Caco-2 (cell line): ENCODE measurements at regions of chr18 and their contacts with region 1.

Region 1: GRCh38 chr18:56575819-56576663 is 62.4 kb downstream of the TXNL1 start:
- DNase-seq: peak in 1 of 2 experiments; percentile 22
- H3K4me3 ChIP-seq: no peak overlapping the region
- H3K4me3 Mint-ChIP-seq: no peak overlapping the region
- H3K27ac Mint-ChIP-seq: no peak overlapping the region
- H3K4me1 ChIP-seq: no peaks in the 10 kb centered on the region
- H3K4me1 Mint-ChIP-seq: peaks cover under 1% of the 10 kb centered on the region
- H3K27me3 ChIP-seq: no peaks in the 10 kb centered on the region
- H3K27me3 Mint-ChIP-seq: peaks cover 3% of the 10 kb centered on the region
- CTCF ChIP-seq: peak; percentile 23 to 26

Region 2: DNA sequence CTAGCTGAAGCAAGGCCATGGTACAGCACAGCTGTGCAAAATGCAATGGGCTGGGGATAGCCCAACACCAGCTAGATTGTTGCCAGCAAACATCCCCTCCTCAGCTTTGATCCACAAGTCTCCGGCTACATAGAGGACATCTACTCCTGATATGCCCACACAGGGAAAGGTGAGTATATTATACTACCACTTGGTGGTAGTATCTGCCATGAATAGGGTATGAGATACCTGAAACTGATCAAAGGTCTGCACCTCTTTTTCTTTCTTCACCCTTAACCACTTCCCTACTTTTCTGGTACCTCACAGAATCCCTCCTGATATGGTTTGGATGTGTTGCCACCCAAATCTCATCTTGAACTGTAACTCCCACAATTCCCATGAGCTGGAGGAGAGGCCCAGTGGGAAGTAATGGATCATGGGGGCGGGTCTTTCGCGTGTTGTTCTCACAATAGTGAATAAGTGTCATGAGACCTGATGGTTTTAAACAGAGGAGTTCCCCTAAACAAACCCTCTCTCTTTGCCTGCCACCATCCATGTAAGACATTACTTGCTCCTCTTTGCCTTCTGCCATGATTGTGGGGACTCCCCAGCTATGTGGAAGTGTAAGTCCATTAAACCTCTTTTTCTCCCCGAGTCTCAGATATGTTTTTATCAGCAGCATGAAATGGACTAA is 217.3 kb before region 1 on chr18:
- CTCF ChIA-PET with region 1: no interaction called
- POLR2A ChIA-PET with region 1: no interaction called
- intact Hi-C with region 1: loop called (anchors 10 kb)
- DNase-seq: no peak
- H3K4me3 ChIP-seq: no peak overlapping the region
- H3K4me3 Mint-ChIP-seq: no peak overlapping the region
- H3K27ac Mint-ChIP-seq: no peak overlapping the region
- H3K4me1 ChIP-seq: no peaks in the 10 kb centered on the region
- H3K4me1 Mint-ChIP-seq: no peaks in the 10 kb centered on the region
- H3K27me3 ChIP-seq: no peaks in the 10 kb centered on the region
- H3K27me3 Mint-ChIP-seq: peaks cover 8% of the 10 kb centered on the region
- CTCF ChIP-seq: no peak

Region 3: GRCh38 chr18:56413862-56414261 is 162.2 kb before region 1 on chr18:
- CTCF ChIA-PET with region 1: no interaction called
- POLR2A ChIA-PET with region 1: no interaction called
- intact Hi-C with region 1: no loop called
- DNase-seq: no peak
- H3K4me3 ChIP-seq: no peak overlapping the region
- H3K4me3 Mint-ChIP-seq: no peak overlapping the region
- H3K27ac Mint-ChIP-seq: no peak overlapping the region
- H3K4me1 ChIP-seq: no peaks in the 10 kb centered on the region
- H3K4me1 Mint-ChIP-seq: no peaks in the 10 kb centered on the region
- H3K27me3 ChIP-seq: no peaks in the 10 kb centered on the region
- H3K27me3 Mint-ChIP-seq: peaks cover 5% of the 10 kb centered on the region
- CTCF ChIP-seq: no peak

Region 4: DNA sequence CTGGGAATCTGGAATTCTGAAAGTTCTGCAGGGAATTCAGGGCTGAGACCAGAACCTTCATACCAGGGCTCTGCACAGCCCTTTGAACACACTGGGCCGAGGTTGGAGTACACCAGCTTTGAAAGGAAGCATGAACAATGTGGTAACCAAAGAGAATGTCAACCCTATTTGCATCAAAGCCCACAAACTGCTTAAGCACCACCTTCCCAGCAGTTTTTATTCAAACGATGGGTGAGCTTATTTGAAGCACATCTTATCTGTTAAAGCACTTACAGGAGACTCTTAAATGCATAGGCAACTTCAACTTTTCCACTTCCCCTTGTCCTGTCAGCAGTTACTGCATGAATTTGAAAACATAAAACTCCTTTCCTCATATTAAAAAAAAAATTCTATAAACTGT is 34.2 kb before region 1 on chr18:
- CTCF ChIA-PET with region 1: no interaction called
- POLR2A ChIA-PET with region 1: no interaction called
- intact Hi-C with region 1: no loop called
- DNase-seq: no peak
- H3K4me3 ChIP-seq: no peak overlapping the region
- H3K4me3 Mint-ChIP-seq: no peak overlapping the region
- H3K27ac Mint-ChIP-seq: no peak overlapping the region
- H3K4me1 ChIP-seq: no peaks in the 10 kb centered on the region
- H3K4me1 Mint-ChIP-seq: no peaks in the 10 kb centered on the region
- H3K27me3 ChIP-seq: no peaks in the 10 kb centered on the region
- H3K27me3 Mint-ChIP-seq: peaks cover 3% of the 10 kb centered on the region
- CTCF ChIP-seq: no peak